GM13977 (cell line): ENCODE measurements at regions of chr1 and their contacts with region 1.

Region 1: DNA sequence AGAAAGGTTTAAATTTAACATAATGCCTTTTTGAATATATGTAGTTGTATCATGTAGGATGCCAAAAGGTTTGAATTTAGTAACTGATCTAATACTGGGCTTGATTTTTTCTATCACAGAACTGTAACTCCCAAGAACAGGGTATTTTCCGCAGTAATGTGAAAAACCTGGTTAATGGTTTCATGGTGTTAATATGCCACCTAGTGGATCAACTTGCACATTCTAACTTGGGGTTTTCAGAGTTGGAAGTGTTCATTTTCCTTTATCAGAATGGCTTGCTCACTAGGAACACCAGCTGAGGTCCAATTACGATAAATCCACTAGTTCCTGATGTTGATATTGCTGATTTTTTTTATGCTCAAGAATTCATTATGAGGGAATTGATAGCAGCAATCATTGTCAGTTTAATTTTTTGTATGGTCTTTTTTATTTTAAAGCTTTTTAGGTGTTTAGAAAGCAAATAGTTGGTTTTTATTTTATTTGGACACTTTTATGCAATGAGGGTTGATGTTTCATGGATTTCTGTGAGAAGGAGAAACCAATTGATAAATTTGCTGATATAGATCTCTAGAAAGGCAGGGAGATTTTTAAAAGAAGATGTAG is 157.2 kb downstream of the PLA2G4A start:
- DNase-seq: peak; percentile 42
- CTCF ChIP-seq: peak; percentile 63

Region 2: GRCh38 chr1:186482661-186483255 is 503.2 kb before region 1 on chr1:
- in situ Hi-C with region 1: loop called (anchors 25 kb)
- DNase-seq: peak; percentile 47
- CTCF ChIP-seq: peak; percentile 93

Region 3: GRCh38 chr1:186618401-186619170 is 367.4 kb before region 1 on chr1:
- in situ Hi-C with region 1: loop called (anchors 10 kb)
- DNase-seq: peak; percentile 74
- CTCF ChIP-seq: no peak